Heart left ventricle (tissue), 16 donors: ENCODE measurements at regions of chr13 and their contacts with region 1.

Region 1: DNA sequence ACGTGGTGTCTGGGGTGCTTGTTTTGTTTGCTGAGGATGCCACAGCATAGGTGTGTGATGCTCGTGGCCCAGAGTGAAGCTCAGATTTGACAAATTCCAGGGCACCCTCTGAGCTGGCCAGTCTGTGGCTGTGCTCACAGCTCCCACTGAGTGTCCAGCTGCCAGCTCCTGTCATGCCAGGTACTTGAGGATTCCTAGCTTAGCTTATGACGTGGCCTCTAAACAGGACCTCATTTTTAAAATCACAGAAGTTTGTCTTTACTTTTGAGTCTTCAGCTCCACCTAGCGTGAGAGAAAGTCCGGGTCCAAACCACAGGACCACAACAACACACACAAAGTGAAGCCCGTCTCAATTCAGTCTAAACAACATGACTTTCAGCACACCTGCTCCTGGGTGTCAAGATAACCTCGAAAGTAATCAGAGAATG is 117.3 kb downstream of the RAB20 start:
- DNase-seq: no peak
- ATAC-seq: peak; percentile 27 to 81 (median 66)
- H3K4me3 ChIP-seq: no peak overlapping the region
- H3K27ac ChIP-seq: peak overlapping the region in 2 of 12 donors; percentile 33 to 73
- H3K4me1 ChIP-seq: peaks cover 0 to 11% (median 1%) of the 10 kb centered on the region in 12 donors
- H3K27me3 ChIP-seq: no peaks in the 10 kb centered on the region
- CTCF ChIP-seq: peak in 9 of 12 donors; percentile 8 to 56 (median 39)
- POLR2A ChIP-seq: no peak

Region 2: GRCh38 chr13:109816112-109816818 is 628.0 kb before region 1 on chr13:
- intact Hi-C with region 1: no loop called
- DNase-seq: no peak
- ATAC-seq: no peak
- H3K4me3 ChIP-seq: no peak overlapping the region
- H3K27ac ChIP-seq: no peak overlapping the region
- H3K4me1 ChIP-seq: no peaks in the 10 kb centered on the region
- H3K27me3 ChIP-seq: peaks cover 0 to 8% (median 0%) of the 10 kb centered on the region in 9 donors
- CTCF ChIP-seq: no peak
- POLR2A ChIP-seq: no peak

Region 3: DNA sequence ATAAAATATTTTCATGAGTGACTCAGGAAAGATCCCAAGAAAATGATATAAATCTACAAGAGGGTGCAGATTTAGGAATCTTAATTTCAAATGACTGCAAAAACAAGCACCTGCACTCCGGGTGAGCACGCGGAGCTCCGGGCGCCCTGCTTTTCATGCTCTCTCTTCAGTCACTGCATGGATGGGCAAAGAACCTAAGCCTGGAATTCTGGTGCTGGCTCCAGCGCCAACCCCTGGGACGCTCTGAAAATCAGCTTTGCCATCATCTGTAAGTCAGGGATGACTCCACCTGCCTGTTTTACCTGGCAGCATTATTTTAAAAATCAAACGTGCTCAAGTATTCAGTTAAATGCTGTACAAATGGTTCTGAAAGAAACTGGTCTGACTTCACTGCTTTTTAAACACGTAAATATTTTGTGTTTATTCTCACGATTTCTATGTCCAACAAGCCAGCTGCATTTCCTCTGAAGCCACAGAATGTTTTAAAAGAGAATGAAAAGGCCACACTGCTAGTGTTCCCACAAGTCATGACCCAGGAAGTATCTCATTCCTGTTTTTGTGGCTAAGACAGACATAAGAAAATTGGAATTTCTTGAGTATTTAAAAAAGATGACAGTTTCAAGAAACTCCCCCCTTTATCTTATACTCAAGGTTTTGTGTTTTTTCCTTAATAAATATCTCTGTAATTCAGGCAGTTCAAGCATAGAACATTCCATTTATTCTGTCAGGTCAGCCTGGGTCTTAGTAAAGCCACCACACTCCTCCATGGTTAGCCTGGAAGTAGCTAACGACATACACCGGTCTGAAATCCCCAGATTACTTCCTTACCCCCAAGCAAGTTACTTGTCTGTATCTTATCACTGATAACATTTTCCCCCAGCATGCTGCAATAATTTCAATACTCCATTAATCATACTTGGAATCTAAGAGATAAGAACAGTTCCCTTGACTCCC is 218.4 kb before region 1 on chr13:
- intact Hi-C with region 1: loop called in 4 of 10 experiments (anchors 5 to 10 kb)
- DNase-seq: no peak
- ATAC-seq: no peak
- H3K4me3 ChIP-seq: no peak overlapping the region
- H3K27ac ChIP-seq: peak overlapping the region in 11 of 12 donors; percentile 8 to 88 (median 39)
- H3K4me1 ChIP-seq: peaks cover 9 to 79% (median 56%) of the 10 kb centered on the region in 12 donors
- H3K27me3 ChIP-seq: no peaks in the 10 kb centered on the region
- CTCF ChIP-seq: no peak
- POLR2A ChIP-seq: no peak

Region 4: DNA sequence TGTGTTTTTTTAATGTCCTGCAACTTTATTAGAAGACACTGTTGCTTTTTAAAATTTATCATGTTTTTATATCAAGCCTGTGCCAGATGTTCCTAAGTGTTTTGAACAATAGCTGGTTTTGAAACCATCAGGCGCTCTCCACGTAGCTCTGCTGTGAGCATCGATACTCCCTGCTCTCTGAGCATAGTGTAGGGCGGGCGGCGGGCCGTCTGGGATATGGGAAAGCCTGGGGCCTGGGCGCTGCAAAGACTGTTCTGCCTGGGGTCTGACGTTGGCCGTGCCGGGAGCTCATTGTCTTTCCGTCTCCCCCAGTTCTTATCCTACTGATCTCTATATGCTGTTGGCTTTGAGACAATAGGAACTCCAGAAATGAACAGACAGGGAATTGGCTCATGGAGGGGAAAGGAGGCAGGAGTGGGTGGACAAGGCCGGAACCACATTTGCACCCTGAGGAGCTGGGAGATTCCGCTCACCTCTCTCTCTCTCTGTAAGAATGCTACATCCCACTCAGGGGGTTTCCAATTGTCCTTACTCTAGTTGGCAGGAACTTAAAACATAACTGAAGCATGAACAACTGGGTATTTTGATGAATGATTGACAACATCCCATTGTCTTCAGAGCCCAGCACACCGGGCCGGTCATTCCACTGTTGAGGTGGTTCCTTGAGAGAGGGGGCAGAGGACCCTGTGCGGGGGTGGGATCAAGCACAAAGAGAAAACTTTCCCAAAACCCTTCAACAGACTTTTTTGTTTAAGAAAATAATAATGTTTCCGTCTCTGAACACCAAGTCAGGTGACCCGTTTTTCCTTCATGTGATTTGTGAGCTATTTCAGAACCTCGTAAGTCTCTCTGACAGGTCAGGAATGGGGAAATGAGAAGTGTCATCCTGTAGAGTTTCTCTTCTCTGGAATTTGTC is 72.4 kb before region 1 on chr13:
- intact Hi-C with region 1: no loop called
- DNase-seq: no peak
- ATAC-seq: peak in 3 of 4 donors; percentile 39 to 77 (median 58)
- H3K4me3 ChIP-seq: peak overlapping the region in 3 of 12 donors; percentile 0 to 12 (median 8)
- H3K27ac ChIP-seq: peak overlapping the region in 11 of 12 donors; percentile 49 to 75 (median 60)
- H3K4me1 ChIP-seq: peaks cover 5 to 71% (median 60%) of the 10 kb centered on the region in 12 donors
- H3K27me3 ChIP-seq: no peaks in the 10 kb centered on the region
- CTCF ChIP-seq: no peak
- POLR2A ChIP-seq: no peak